ENCODE measurements at regions of chr19 and their contacts with region 1.

Region 1: DNA sequence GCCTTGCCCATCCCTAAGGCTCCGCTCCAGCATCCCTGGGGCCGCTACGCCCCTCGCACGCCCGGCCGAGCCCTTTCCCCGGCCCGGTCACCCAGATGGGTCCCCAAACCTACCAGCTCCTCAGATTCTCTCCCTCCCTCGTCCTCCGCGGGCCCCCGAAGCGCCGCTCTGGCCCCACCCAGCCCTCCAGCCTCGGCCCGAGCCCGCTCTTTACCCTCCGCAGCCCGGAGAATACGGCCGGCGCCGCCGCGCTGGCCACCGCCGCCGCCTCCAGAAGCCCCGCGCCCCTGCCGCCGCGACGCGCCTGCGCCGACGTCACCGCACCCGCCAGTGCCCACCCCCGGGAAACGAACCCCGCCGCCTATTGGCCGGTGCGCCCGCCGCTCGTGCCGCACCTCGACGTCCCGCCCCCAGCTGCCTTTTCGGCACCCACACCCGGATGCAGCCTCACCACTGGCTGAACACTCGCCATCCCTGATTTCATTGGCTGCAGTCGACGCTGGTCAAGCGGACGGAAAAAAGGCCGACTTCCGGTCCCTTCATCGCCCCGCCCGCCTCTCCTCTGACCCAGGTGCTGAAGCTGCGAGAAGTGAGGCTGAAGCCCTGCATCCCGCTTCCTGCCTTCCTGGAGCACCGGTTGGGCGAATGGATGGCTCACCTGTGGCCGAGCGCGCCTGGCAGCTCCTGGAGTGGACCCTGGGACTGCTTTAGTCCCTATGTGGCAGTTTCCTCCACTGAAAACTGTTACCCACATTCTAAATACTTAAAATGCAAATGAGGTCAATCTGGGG is at the start of gene DAPK3:
- DNase-seq: peak; percentile 95
- H3K4me3 ChIP-seq: peak within 1 kb of the TSS; percentile 98
- H3K27ac ChIP-seq: peak within 1 kb of the TSS; percentile 98
- H3K27me3 ChIP-seq: no peaks in the 10 kb centered on the region
- CTCF ChIP-seq: no peak
- polyA plus RNA-seq, gene DAPK3: 105 and 149 TPM in 2 replicates

Region 2: GRCh38 chr19:3762501-3763459 is 208.2 kb before region 1 on chr19 and contains the start of gene MRPL54:
- CTCF ChIA-PET with region 1: no interaction called
- POLR2A ChIA-PET with region 1: interaction called, 10 read pairs
- DNase-seq: peak; percentile 98
- H3K4me3 ChIP-seq: peak within 1 kb of the TSS; percentile 99
- H3K27ac ChIP-seq: peak within 1 kb of the TSS; percentile 98
- H3K27me3 ChIP-seq: no peaks in the 10 kb centered on the region
- CTCF ChIP-seq: no peak
- polyA plus RNA-seq, gene MRPL54: 31.2 and 36.9 TPM in 2 replicates

Region 3: GRCh38 chr19:3879656-3880055 is 91.3 kb before region 1 on chr19:
- CTCF ChIA-PET with region 1: no interaction called
- POLR2A ChIA-PET with region 1: no interaction called
- DNase-seq: no peak
- H3K4me3 ChIP-seq: no peak overlapping the region
- H3K27ac ChIP-seq: no peak overlapping the region
- H3K27me3 ChIP-seq: peaks cover 27% of the 10 kb centered on the region
- CTCF ChIP-seq: no peak; the same call in 1 of the 2 replicates

Region 4: DNA sequence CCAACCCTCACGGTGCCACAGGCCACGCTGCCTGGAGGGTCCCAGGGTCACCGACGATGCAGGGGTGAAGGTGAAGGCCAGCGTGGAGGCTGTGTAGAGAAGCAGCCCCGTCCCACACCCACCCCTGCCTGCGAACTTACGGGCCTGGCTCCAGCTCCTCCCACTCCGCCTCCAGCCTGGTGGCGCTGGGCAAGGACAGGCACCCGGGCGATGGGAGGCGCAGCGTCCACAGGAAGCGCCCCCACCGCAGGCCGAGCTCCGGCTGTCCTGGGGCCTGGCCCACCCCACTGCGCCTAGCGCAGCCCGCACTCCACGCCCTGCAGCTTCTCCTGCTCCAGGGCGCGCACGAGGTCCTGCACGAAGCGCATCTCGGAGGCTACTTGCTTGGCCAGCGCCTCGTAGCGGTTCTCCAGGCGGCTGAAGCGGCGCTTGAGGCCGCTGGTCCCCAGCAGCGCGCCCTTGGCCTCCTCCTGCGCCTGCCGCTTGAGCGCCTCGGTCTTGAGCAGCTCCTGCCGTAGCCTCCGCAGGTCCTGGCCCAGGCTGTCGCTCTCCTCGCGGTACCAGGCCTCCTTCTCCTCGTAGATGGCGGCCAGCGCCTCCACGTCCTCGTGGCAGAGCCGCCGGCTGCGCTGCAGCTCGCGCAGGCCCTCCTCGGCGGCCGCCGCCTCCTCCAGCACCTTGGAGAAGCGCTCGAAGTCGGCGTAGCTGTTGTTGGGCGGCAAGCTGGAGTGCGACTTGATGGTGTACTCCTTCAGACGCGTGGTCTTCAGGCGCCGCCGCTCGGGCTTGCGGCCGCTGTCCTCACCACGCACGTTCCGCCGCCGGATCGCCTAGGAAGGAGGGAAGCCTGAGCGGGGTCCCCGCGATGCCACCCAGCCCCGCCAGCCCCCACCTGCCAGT is 11.9 kb before region 1 on chr19:
- CTCF ChIA-PET with region 1: no interaction called
- POLR2A ChIA-PET with region 1: interaction called, 71 read pairs
- DNase-seq: no peak
- H3K4me3 ChIP-seq: no peak overlapping the region
- H3K27ac ChIP-seq: no peak overlapping the region
- H3K27me3 ChIP-seq: no peaks in the 10 kb centered on the region
- CTCF ChIP-seq: no peak